Psoas muscle (tissue), 8 donors: ENCODE measurements at regions of chr18 and their contacts with region 1.

Region 1: GRCh38 chr18:21203096-21203495 is 38.9 kb upstream of the GREB1L start:
- DNase-seq: no peak
- ATAC-seq: no peak
- H3K4me3 ChIP-seq: no peak overlapping the region
- H3K27ac ChIP-seq: no peak overlapping the region
- H3K4me1 ChIP-seq: no peaks in the 10 kb centered on the region
- H3K27me3 ChIP-seq: no peaks in the 10 kb centered on the region
- CTCF ChIP-seq: no peak

Region 2: DNA sequence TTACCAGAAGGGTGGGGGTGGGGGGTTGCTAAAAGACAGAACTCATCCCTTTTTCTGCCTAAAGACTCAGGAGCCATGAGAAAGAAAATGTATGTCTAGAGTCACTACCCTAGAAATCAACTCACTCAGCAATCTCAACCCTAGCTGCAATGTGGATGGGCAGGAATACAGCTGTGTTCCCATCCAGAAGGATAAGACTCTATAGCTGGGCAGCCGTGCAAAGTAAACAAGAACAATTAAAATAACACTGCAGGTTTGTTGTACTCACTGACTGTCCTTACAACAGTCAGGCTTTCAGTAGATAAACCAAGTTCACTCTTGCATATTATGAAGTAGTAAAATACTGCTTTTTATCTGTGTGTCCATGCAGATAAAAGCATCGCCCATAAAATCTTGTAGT is 323.4 kb after region 1 on chr18:
- intact Hi-C with region 1: loop called in 1 of 2 experiments (anchors 10 kb)
- DNase-seq: no peak
- ATAC-seq: no peak
- H3K4me3 ChIP-seq: no peak overlapping the region
- H3K27ac ChIP-seq: no peak overlapping the region
- H3K4me1 ChIP-seq: no peaks in the 10 kb centered on the region
- H3K27me3 ChIP-seq: no peaks in the 10 kb centered on the region
- CTCF ChIP-seq: no peak